Endothelial cell of umbilical vein (primary cell): ENCODE measurements at regions of chr1 and their contacts with region 1.

Region 1: GRCh38 chr1:26279456-26280332 is at the start of gene SH3BGRL3:
- DNase-seq: peak; percentile 89
- H3K4me3 ChIP-seq: peak within 1 kb of the TSS; percentile 54 to 95 (median 69)
- H3K27ac ChIP-seq: peak within 1 kb of the TSS; percentile 82
- H3K4me1 ChIP-seq: peaks cover 52% of the 10 kb centered on the region
- H3K27me3 ChIP-seq: no peaks in the 10 kb centered on the region
- CTCF ChIP-seq: peak; percentile 50 to 69
- POLR2A ChIP-seq: peak; percentile 97
- total RNA-seq, gene SH3BGRL3: 337 and 344 TPM in 2 replicates

Region 2: DNA sequence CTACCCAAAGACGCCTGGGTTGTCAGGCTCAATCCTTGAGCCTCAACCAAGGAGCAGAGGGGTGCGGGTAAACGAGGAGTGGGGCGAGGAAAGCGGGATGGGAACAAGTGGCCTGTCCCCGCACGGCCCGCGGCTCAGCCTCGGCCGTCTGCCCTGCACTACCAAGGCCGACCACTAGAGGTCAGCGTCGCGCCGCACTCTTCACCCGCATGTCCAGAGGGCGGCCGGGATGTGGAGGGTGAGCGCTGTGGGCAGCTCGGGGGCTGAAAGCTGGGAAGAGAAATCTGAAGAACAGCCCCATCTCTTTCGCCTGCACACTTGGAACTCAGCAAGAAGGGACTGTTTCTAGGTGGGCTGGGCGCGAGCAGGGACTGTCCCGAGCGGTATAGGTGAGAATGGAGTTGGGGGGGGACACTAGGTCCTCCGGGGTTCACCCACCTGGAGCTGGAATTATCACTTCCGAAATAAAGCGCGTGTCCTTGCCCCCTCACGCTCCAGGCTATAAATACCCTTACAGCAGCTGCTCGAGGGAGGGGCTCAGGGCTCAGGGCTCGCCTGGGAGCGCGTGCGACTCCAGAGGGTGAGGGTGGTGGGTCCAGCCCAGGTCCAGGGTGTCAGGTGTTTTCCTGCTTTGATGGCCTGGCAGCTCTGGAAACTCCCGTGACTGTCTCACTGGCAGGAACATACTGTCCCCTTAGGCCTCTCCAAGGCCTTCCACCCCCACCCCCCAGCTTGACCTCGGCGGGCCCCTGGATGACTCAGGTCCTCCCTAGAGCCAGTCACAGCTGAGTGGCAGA is 243.5 kb before region 1 on chr1:
- CTCF ChIA-PET with region 1: interaction called, 8 read pairs
- POLR2A ChIA-PET with region 1: no interaction called
- dilution Hi-C with region 1: no loop called
- intact Hi-C with region 1: loop called (anchors 5 kb)
- DNase-seq: peak; percentile 74
- H3K4me3 ChIP-seq: peak overlapping the region; percentile 65 to 85 (median 81)
- H3K27ac ChIP-seq: no peak overlapping the region
- H3K4me1 ChIP-seq: peaks cover 15% of the 10 kb centered on the region
- H3K27me3 ChIP-seq: peaks cover 0 to 3% of the 10 kb centered on the region in 2 experiments
- CTCF ChIP-seq: peak; percentile 98 to 99
- POLR2A ChIP-seq: no peak

Region 3: GRCh38 chr1:26169669-26170471 is 109.8 kb before region 1 on chr1 and contains the start of gene ZNF593:
- CTCF ChIA-PET with region 1: interaction called, 10 read pairs
- POLR2A ChIA-PET with region 1: interaction called, 6 read pairs
- dilution Hi-C with region 1: no loop called
- intact Hi-C with region 1: loop called (anchors 1 kb)
- DNase-seq: peak; percentile 88
- H3K4me3 ChIP-seq: peak within 1 kb of the TSS; percentile 46 to 72 (median 67)
- H3K27ac ChIP-seq: peak within 1 kb of the TSS; percentile 47
- H3K4me1 ChIP-seq: no peaks in the 10 kb centered on the region
- H3K27me3 ChIP-seq: no peaks in the 10 kb centered on the region
- CTCF ChIP-seq: peak; percentile 92 to 99
- POLR2A ChIP-seq: peak; percentile 88
- total RNA-seq, gene ZNF593: 30.5 and 41.0 TPM in 2 replicates

Region 4: GRCh38 chr1:26265405-26265804 is 14.3 kb before region 1 on chr1:
- CTCF ChIA-PET with region 1: interaction called, 17 read pairs
- POLR2A ChIA-PET with region 1: no interaction called
- dilution Hi-C with region 1: no loop called
- intact Hi-C with region 1: no loop called
- DNase-seq: no peak
- H3K4me3 ChIP-seq: no peak overlapping the region
- H3K27ac ChIP-seq: no peak overlapping the region
- H3K4me1 ChIP-seq: no peaks in the 10 kb centered on the region
- H3K27me3 ChIP-seq: no peaks in the 10 kb centered on the region
- CTCF ChIP-seq: no peak
- POLR2A ChIP-seq: no peak

Region 5: DNA sequence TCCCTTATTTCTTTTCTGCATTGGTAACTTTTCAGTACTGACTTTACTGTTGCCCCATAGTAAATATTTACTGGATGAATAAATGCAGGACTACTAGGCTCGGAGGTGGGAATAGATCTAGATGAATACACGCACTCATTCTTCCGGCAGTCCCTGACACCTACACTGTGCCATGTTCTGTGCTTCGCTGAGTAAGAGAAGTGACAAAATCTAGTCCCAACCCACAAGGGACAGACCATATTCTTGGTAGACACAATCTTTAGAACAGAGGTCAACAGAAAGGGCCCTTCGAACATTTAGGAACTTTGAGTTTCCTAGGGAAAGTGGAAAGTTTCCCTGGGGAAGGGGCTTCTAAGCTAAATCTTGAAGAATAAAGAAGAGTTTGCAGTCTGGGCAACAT is 34.8 kb after region 1 on chr1:
- CTCF ChIA-PET with region 1: interaction called, 132 read pairs
- POLR2A ChIA-PET with region 1: no interaction called
- dilution Hi-C with region 1: no loop called
- intact Hi-C with region 1: no loop called
- DNase-seq: no peak
- H3K4me3 ChIP-seq: no peak overlapping the region
- H3K27ac ChIP-seq: no peak overlapping the region
- H3K4me1 ChIP-seq: no peaks in the 10 kb centered on the region
- H3K27me3 ChIP-seq: peaks cover 2 to 7% of the 10 kb centered on the region in 2 experiments
- CTCF ChIP-seq: no peak
- POLR2A ChIP-seq: no peak

Region 6: DNA sequence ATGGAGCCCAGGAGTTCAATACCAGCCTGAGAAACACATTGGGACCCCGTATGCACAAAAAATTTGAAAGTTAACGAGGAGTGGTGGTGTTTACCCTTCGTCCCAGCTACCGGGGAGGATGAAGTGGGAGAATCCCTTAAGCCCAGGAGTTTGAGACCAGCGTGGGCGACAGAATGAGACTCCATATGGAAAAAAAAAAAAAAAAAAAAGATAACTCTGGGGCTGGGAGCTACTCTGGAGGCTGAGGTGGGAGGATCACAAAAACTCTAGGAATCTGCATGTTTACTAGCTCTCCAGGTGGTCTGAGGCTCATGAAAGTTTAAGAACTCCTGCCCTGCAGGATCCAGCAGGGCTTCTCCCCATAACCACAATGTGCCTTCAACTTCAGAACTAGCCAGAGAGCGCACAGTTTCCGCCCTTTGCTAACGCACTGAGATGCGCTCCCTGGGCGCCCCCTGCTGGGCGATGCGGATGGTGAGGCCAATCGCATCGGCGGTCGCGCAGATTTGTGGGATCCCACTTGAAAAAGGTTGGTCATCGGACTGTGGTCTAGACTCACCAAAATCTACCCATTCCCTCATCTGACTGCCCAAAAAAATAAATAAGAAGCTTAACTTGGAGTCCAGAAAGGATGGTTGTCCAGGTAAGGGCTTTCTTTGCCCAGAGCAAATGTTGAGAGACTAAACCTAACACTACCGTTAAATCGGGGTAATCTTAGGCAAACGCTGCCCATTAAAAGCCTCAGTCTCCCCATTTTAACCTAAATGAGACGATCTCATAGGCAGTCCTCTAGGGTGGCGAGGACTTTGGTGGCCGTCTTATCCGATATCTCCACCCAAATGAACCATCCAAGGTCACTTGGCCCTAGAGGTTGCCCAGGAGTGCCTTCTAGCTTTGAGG is 84.1 kb after region 1 on chr1:
- CTCF ChIA-PET with region 1: interaction called, 35 read pairs
- POLR2A ChIA-PET with region 1: no interaction called
- dilution Hi-C with region 1: no loop called
- intact Hi-C with region 1: loop called (anchors 2 kb)
- DNase-seq: peak; percentile 67
- H3K4me3 ChIP-seq: no peak overlapping the region
- H3K27ac ChIP-seq: no peak overlapping the region
- H3K4me1 ChIP-seq: no peaks in the 10 kb centered on the region
- H3K27me3 ChIP-seq: peaks cover 18 to 23% of the 10 kb centered on the region in 2 experiments
- CTCF ChIP-seq: peak; percentile 96 to 99
- POLR2A ChIP-seq: no peak

Region 7: DNA sequence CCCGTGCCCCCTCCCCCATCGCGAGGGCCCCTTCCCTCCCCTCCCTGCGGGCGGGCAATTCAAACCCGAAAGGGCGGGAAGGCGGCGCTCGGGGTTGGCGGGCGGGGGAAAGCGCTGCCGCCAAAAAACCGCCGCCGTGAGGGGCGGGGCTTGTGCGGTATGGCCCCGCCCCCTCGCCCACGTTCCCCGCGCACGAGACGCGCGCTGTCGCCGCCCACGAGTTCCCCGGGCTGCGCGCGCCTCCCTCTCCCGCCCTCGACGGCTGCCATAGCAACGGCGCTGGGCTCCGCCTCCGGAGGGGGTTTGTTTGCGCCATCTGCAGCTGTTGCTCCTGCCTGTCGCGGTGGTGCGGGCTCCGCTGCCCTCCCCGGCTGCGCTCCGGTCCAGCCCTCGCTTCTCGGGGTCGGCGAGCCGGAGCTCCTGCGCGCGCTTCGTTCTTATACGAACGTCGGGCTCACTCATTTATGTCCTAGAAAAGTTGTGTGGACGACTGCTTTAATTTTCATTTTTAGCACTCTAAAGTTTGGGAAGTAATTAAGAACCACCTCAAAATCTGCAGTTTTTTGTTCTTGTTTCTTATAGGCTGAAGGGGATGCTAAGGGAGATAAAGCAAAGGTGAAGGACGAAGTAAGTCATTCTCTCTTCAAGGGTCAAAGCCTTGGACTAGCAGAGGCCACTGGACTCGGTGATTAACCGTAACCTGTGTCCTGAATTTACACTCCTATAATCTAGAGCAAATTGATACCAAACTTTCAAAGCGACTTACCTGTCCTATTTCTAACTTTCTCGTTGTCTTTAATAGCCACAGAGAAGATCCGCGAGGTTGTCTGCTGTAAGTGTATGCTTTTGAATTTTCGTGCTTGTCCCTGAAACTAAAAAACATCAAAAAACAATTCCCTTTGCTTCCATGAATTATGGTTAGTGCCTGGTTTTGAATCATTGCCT is 193.5 kb after region 1 on chr1:
- CTCF ChIA-PET with region 1: interaction called, 3 read pairs
- POLR2A ChIA-PET with region 1: no interaction called
- dilution Hi-C with region 1: no loop called
- intact Hi-C with region 1: loop called (anchors 5 kb)
- DNase-seq: peak; percentile 95
- H3K4me3 ChIP-seq: peak overlapping the region; percentile 82 to 98 (median 98)
- H3K27ac ChIP-seq: peak overlapping the region; percentile 31
- H3K4me1 ChIP-seq: peaks cover 11% of the 10 kb centered on the region
- H3K27me3 ChIP-seq: no peaks in the 10 kb centered on the region
- CTCF ChIP-seq: no peak
- POLR2A ChIP-seq: peak; percentile 14